AG04450 (cell line): ENCODE measurements at regions of chr1 and their contacts with region 1.

Region 1: DNA sequence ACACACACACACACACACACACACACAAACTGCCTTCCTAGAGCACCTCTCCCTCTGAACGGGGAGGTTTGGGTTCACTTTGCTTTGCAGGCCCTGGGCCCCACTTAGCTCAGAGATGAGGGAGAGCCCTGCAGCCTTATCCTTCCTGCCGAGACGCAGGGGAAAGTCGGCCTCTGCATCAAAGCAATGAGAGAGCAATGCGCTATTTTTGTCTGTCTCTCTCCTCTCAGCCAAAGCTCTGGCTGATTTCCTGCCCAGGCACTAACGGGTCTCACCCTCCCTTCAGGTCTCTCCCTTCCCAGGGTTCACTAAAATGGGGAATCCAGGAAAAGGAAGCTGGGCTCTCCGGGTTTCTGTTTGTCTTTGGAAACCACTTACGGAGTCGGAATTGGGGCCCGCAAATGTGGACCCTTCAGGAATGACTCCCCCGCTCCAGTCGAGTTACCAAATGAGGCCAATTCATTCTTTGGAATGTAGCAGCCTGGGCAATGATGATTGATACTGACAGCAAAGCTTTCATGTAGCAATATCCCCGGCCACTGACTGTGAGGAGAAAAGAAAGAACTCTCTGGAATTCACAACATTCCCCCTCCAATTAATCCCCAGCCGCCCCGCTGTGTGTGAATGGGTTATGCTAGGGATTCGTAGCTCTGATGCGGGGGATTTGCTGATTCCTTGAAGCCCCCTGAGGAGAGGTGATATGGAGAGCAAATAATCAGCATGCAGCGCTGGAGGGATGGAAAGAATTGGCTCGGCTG is 61.5 kb upstream of the WLS start:
- DNase-seq: no peak
- H3K4me3 ChIP-seq: no peak overlapping the region; the same call in 1 of the 2 replicates
- H3K27ac ChIP-seq: peak overlapping the region; percentile 39
- H3K27me3 ChIP-seq: peaks cover 2% of the 10 kb centered on the region
- CTCF ChIP-seq: no peak

Region 2: DNA sequence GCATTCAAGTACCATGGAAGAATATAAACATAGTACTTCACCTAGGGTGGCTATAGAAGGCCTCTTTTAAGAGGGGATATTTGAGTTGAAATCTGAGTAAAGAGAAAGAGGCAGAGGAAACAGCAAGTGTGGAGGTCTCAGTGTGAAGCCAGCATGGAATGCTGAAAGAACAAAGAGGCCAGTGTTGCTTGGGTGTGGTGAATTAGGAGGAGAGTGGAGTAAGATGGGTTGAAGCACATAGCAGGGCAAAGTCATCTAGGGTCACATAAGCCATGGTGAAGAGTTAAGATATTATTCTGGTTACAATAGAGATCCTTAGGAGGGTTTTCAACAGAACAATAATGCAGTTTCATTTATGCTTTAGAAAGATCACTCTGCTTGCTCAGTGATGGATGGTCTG is 1196.5 kb before region 1 on chr1:
- CTCF ChIA-PET with region 1: interaction called, 10 read pairs
- POLR2A ChIA-PET with region 1: no interaction called
- DNase-seq: no peak
- H3K4me3 ChIP-seq: no peak overlapping the region
- H3K27ac ChIP-seq: no peak overlapping the region
- H3K27me3 ChIP-seq: no peaks in the 10 kb centered on the region
- CTCF ChIP-seq: no peak

Region 3: GRCh38 chr1:68178821-68179490 is 114.8 kb before region 1 on chr1:
- CTCF ChIA-PET with region 1: no interaction called
- POLR2A ChIA-PET with region 1: no interaction called
- DNase-seq: no peak
- H3K4me3 ChIP-seq: no peak overlapping the region
- H3K27ac ChIP-seq: peak overlapping the region; percentile 25
- H3K27me3 ChIP-seq: no peaks in the 10 kb centered on the region
- CTCF ChIP-seq: no peak